ENCODE measurements at regions of chrX and their contacts with region 1.

Region 1: GRCh38 chrX:103817502-103817901 is 14.6 kb downstream of the RAB9B start:
- DNase-seq: no peak
- H3K4me3 ChIP-seq: no peak overlapping the region
- H3K27ac ChIP-seq: no peak overlapping the region
- H3K4me1 ChIP-seq: no peaks in the 10 kb centered on the region
- H3K27me3 ChIP-seq: no peaks in the 10 kb centered on the region
- CTCF ChIP-seq: peak; percentile 17 to 82 (median 62)
- POLR2A ChIP-seq: no peak

Region 2: DNA sequence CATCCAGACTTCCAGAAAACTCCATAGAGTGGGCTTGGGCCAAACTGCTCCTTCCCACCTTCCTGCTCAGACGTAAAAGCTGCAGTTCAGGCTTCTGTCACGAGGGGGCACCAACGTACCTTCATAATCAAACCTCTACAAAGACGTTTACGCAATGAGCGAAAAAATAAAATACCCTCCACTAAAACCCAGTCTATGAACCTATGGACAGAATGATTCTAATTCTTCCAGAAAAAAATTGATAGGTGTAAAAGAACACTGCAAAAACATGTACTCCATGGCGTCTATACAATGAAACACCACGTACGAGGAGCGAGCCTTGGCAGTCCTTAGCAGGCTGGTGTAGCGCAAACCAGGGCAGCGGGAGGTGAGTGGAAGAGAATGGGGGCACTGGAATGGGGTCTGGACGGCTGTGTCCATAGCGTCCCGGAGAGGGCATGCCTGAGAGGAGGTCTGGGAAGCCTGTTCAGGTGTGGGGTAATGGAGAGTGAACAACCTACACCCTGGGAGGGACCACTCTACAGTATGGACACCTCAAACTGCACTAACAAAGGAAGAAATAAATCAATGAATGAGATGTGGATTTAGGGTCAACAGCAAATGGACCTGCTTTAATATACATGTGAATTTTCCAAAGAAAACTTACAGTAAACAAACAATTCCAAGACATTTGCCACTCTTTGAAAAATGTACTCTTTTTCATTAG is 283.8 kb before region 1 on chrX:
- intact Hi-C with region 1: loop called (anchors 5 kb)
- DNase-seq: peak; percentile 81
- H3K4me3 ChIP-seq: peak overlapping the region in 3 of 8 donors; percentile 4 to 51 (median 33)
- H3K27ac ChIP-seq: peak overlapping the region in 1 of 8 donors; percentile 16
- H3K4me1 ChIP-seq: peaks cover 0 to 11% (median 0%) of the 10 kb centered on the region in 6 donors
- H3K27me3 ChIP-seq: peaks cover 0 to 7% (median 0%) of the 10 kb centered on the region in 7 donors
- CTCF ChIP-seq: peak; percentile 44 to 84 (median 80)
- POLR2A ChIP-seq: no peak

Region 3: GRCh38 chrX:103585411-103586313 is 231.8 kb before region 1 on chrX and contains the start of gene TCEAL4:
- intact Hi-C with region 1: no loop called
- DNase-seq: peak; percentile 85
- H3K4me3 ChIP-seq: peak within 1 kb of the TSS; percentile 34 to 79 (median 46)
- H3K27ac ChIP-seq: peak within 1 kb of the TSS; percentile 24 to 85 (median 79)
- H3K4me1 ChIP-seq: peaks cover 0 to 15% (median 0%) of the 10 kb centered on the region in 6 donors
- H3K27me3 ChIP-seq: no peaks in the 10 kb centered on the region
- CTCF ChIP-seq: no peak
- POLR2A ChIP-seq: no peak
- total RNA-seq, gene TCEAL4: 38.5 to 76.0 (median 63.1) TPM

Region 4: DNA sequence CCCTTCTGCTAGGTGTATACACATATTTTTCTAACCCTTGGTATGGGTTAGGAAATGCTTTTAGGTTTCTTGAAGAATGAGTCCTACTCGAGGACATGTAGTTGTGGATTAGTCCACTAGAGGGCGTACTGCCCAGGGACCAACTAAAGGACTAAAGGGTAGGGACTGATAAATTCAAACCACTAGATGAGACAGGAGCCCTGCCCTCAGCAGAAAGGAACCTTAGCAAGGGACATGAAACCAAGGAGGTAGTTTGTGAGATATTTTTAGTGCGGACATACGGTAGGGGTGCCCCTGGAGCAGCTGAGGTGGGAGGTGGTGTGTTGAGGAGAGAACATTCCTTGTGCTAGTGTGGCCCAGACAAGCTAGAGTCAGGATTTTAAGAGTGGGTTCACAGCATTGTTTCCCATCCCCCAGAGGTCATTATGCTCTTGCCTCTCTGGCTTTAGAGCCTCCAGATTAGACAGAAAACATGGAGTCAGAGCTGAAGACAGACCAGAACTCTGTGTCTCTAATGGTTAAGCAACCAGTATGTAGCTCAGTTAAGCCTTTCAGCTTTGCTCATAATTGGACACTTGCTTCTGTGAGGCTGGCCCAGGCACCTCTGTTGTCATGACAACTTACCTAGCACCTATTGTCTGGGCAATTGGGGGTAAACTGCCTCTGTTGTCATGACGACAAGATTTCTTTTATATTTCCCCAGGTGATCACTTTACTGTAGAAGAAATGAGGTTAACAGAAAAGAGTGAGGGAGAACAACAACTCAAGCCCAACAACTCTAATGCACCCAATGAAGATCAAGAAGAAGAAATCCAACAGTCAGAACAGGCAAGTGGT is 105.8 kb before region 1 on chrX:
- intact Hi-C with region 1: loop called (anchors 10 kb)
- DNase-seq: no peak
- H3K4me3 ChIP-seq: no peak overlapping the region
- H3K27ac ChIP-seq: no peak overlapping the region
- H3K4me1 ChIP-seq: no peaks in the 10 kb centered on the region
- H3K27me3 ChIP-seq: no peaks in the 10 kb centered on the region
- CTCF ChIP-seq: peak in 10 of 11 experiments; percentile 22 to 67 (median 58)
- POLR2A ChIP-seq: no peak

Region 5: GRCh38 chrX:104284507-104284906 is 467.0 kb after region 1 on chrX:
- intact Hi-C with region 1: no loop called
- DNase-seq: no peak
- H3K4me3 ChIP-seq: no peak overlapping the region
- H3K27ac ChIP-seq: no peak overlapping the region
- H3K4me1 ChIP-seq: no peaks in the 10 kb centered on the region
- H3K27me3 ChIP-seq: peaks cover 0 to 51% (median 0%) of the 10 kb centered on the region in 7 donors
- CTCF ChIP-seq: no peak
- POLR2A ChIP-seq: no peak

Measured in spleen (tissue), 13 donors.